ENCODE measurements at regions of chr3 and their contacts with region 1.

Region 1: GRCh38 chr3:71069797-71070196 is 513.7 kb downstream of the FOXP1 start:
- DNase-seq: peak in 4 of 5 donors; percentile 56 to 70 (median 67)
- ATAC-seq: peak; percentile 33 to 73 (median 57)
- H3K4me3 ChIP-seq: no peak overlapping the region
- H3K27ac ChIP-seq: peak overlapping the region in 3 of 12 donors; percentile 24 to 97 (median 25)
- H3K4me1 ChIP-seq: peaks cover 5 to 67% (median 41%) of the 10 kb centered on the region in 12 donors
- H3K27me3 ChIP-seq: no peaks in the 10 kb centered on the region
- CTCF ChIP-seq: peak; percentile 28 to 75 (median 58)
- POLR2A ChIP-seq: no peak

Region 2: DNA sequence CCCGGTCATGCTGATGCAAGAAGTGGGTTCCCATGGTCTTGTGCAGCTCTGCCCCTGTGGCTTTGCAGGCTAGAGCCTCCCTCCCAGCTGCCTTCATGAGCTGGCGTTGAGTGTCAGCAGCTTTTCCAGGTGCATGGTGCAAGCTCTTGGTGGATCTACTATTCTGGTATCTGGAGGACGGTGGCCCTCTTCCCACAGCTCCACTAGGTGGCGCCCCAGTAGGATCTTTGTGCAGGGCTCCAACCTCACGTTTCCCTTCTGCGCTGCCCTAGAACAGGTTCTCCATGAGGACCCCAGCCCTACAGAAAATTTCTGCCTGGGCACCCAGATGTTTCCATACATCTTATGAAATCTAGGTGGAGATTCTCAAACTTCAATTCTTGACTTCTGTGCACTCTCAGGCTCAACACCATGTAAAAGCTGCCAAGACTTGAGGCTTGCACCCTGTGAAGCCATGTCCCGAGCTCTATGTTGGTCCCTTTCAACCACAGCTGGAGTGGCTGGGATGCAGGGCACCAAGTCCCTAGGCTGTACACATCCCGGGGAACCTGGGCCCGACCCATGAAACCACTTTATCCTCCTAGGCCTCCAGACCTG is 519.0 kb before region 1 on chr3:
- intact Hi-C with region 1: loop called in 3 of 10 experiments (anchors 5 to 10 kb)
- DNase-seq: peak; percentile 55 to 79 (median 66)
- ATAC-seq: peak in 3 of 4 donors; percentile 85 to 87 (median 85)
- H3K4me3 ChIP-seq: no peak overlapping the region
- H3K27ac ChIP-seq: no peak overlapping the region
- H3K4me1 ChIP-seq: no peaks in the 10 kb centered on the region
- H3K27me3 ChIP-seq: no peaks in the 10 kb centered on the region
- CTCF ChIP-seq: peak; percentile 67 to 88 (median 78)
- POLR2A ChIP-seq: no peak

Region 3: DNA sequence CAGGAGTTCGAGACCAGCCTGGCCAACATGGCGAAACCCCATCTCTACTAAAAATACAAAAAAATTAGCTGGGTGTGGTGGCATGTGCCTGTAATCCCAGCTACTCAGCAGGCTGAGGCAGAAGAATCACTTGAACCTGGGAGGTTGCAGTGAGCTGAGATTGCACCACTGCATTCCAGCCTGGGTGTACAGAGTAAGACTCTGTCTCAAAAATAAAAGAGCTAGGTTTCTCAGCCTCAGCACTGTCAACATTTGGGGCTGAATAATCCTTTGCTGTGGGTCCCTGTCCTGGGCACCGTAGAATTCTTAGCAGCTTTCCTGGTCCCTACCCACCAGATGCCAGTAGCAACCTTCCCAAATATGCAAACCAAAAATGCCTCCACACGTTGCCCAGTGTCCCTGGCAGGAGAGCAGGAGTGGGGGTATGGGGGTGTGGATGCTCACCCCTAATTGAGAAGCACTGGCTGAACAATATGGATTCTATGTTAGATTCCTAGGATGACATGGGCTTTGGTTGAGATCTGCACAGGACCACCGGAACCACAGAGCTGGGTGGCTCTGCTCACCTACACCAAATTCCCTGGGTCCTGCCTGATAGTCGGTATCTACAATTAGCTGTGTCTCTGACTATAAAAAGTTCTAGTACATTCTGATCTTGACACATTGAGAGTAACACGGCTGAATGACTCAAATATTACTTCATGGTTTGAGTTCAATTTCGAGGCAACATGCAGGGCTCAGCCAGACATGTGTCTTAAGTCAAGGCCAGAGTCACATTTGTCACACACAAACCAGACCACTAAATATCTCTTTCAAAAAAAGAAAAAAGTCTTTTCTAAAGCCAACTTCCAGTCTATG is 180.4 kb before region 1 on chr3:
- intact Hi-C with region 1: no loop called
- DNase-seq: peak in 1 of 5 donors; percentile 28
- ATAC-seq: peak; percentile 85 to 98 (median 96)
- H3K4me3 ChIP-seq: no peak overlapping the region
- H3K27ac ChIP-seq: peak overlapping the region in 6 of 12 donors; percentile 9 to 55 (median 40)
- H3K4me1 ChIP-seq: peaks cover 0 to 15% (median 7%) of the 10 kb centered on the region in 12 donors
- H3K27me3 ChIP-seq: no peaks in the 10 kb centered on the region
- CTCF ChIP-seq: no peak
- POLR2A ChIP-seq: no peak

Region 4: DNA sequence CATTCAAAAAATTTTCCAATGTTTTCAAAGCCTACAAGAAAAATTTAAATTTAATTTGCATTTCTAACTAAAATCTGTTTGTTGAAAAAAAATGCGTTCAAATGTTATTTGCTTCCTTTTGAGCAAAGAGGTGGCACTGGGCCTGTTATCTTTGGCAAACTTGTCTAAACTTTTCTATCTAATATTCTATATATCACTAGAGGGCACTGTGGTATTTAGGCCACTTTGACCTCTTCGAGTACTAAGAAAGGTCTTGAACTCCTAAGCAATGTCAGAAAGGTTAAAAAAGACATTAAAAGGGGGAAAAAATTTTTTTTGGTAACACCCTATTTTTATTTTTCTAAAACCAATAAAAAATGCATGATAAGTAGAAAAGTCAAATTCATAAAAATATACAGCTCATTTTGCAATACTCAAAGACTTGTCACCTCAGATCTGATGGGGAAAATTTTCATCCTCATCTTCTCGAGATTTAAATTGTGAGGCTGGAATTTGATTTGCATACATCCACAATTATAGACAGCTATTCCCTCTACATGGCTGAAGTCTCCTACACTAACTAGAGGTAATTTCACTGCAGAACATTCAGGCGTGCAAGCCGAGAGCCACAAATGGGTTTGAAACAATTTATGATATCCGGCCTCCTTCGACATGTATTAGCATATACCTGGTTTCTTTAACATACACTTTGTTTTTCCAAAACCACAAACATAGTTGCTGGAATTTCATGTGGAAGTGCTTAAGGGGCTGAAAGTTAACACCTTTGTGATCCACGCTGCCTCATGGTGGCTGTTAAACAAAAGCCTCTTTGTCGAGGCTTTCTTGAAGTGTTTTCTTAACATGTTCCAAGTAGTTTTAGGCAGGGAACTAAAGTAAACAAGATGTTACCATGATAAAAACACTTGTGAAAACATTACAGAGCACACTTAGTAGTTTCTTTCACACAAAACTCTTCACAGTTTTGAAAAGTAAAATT is 62.7 kb before region 1 on chr3:
- intact Hi-C with region 1: loop called in 9 of 10 experiments (anchors 2 to 10 kb)
- DNase-seq: no peak
- ATAC-seq: peak in 3 of 4 donors; percentile 22 to 69 (median 65)
- H3K4me3 ChIP-seq: no peak overlapping the region
- H3K27ac ChIP-seq: peak overlapping the region in 10 of 12 donors; percentile 4 to 55 (median 32)
- H3K4me1 ChIP-seq: peaks cover 0 to 78% (median 39%) of the 10 kb centered on the region in 12 donors
- H3K27me3 ChIP-seq: no peaks in the 10 kb centered on the region
- CTCF ChIP-seq: peak in 11 of 12 donors; percentile 38 to 72 (median 55)
- POLR2A ChIP-seq: no peak

Region 5: GRCh38 chr3:71109241-71109976 is 39.6 kb after region 1 on chr3:
- intact Hi-C with region 1: loop called in 1 of 10 experiments (anchors 5 kb)
- DNase-seq: no peak
- ATAC-seq: peak in 1 of 4 donors; percentile 48
- H3K4me3 ChIP-seq: no peak overlapping the region
- H3K27ac ChIP-seq: peak overlapping the region in 4 of 12 donors; percentile 1 to 71 (median 28)
- H3K4me1 ChIP-seq: peaks cover 0 to 64% (median 40%) of the 10 kb centered on the region in 12 donors
- H3K27me3 ChIP-seq: no peaks in the 10 kb centered on the region
- CTCF ChIP-seq: no peak
- POLR2A ChIP-seq: no peak

Region 6: GRCh38 chr3:71247221-71247976 is 177.6 kb after region 1 on chr3:
- intact Hi-C with region 1: loop called in 1 of 10 experiments (anchors 5 kb)
- DNase-seq: peak in 1 of 5 donors; percentile 47
- ATAC-seq: peak; percentile 32 to 64 (median 54)
- H3K4me3 ChIP-seq: no peak overlapping the region
- H3K27ac ChIP-seq: peak overlapping the region in 6 of 12 donors; percentile 11 to 81 (median 70)
- H3K4me1 ChIP-seq: peaks cover 0 to 62% (median 35%) of the 10 kb centered on the region in 12 donors
- H3K27me3 ChIP-seq: no peaks in the 10 kb centered on the region
- CTCF ChIP-seq: peak in 3 of 12 donors; percentile 9 to 13 (median 12)
- POLR2A ChIP-seq: no peak